Caco-2 (cell line): ENCODE measurements at regions of chr2 and their contacts with region 1.

Region 1: DNA sequence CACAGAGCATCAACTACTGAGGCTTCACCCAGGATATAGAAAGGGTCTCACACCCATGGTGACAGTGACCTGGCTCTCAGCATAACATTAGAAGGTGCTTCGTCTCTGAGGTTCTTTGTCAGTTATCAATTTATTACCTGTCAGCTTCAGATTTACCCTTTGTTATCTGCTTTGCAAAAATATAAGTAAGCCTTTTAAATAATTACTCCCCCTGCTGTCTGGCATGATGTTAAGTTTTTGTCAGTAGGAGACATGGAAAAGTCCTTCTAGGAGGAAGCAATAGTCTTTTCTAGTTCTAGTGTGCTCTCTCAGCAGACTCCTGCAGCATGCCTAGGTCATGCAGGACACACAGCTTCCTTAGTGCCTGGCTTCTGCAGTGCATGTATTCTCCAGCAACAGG is 149.9 kb downstream of the RDH14 start:
- DNase-seq: no peak
- H3K4me3 ChIP-seq: no peak overlapping the region
- H3K4me3 Mint-ChIP-seq: no peak overlapping the region
- H3K27ac Mint-ChIP-seq: no peak overlapping the region
- H3K4me1 ChIP-seq: no peaks in the 10 kb centered on the region
- H3K4me1 Mint-ChIP-seq: no peaks in the 10 kb centered on the region
- H3K27me3 ChIP-seq: no peaks in the 10 kb centered on the region
- H3K27me3 Mint-ChIP-seq: no peaks in the 10 kb centered on the region
- CTCF ChIP-seq: peak in 1 of 2 experiments; percentile 26

Region 2: DNA sequence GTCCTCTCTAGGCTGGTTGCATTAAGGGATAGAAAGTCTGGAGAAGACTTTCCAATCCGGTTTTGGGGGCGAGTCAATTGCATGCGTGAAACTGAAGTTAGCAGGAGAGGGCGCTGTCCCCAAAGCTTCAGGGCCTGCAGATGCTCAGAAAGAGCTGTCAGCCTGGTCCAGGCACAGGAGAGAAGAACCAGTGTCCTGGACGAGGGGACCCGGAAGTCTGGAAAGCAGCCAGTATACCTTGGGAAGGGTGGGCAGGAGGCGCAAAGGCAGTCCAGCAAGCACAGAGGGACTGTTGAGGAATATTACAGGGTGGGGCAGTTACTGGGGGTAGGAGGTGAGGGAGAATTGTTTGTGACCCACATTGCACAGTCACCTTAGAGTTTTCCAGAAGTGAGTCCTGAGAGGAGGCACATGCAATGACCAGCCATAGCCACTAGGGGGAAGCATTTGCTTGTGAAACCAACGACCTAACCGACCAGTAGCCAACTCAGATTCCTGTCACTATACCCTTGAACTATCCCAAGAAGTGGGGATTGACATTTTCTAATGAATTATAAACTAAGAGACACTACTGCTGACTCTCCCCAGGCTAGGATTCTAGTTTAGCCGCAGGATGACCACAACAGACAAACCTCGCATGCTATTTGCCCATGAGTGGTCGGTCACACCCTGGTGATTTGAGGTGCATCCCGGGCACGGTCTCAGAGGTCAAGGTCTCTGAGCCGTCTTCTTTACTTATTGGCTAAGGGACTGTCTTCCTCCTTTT is 22.9 kb before region 1 on chr2:
- CTCF ChIA-PET with region 1: no interaction called
- POLR2A ChIA-PET with region 1: no interaction called
- intact Hi-C with region 1: loop called (anchors 1 kb)
- DNase-seq: peak; percentile 72 to 82
- H3K4me3 ChIP-seq: no peak overlapping the region
- H3K4me3 Mint-ChIP-seq: no peak overlapping the region
- H3K27ac Mint-ChIP-seq: no peak overlapping the region
- H3K4me1 ChIP-seq: no peaks in the 10 kb centered on the region; the same call in 1 of the 2 replicates
- H3K4me1 Mint-ChIP-seq: no peaks in the 10 kb centered on the region
- H3K27me3 ChIP-seq: no peaks in the 10 kb centered on the region; the same call in 1 of the 2 replicates
- H3K27me3 Mint-ChIP-seq: peaks cover 3% of the 10 kb centered on the region
- CTCF ChIP-seq: peak; percentile 95 to 98

Region 3: GRCh38 chr2:18432999-18433398 is 22.5 kb after region 1 on chr2:
- CTCF ChIA-PET with region 1: no interaction called
- POLR2A ChIA-PET with region 1: no interaction called
- intact Hi-C with region 1: no loop called
- DNase-seq: no peak
- H3K4me3 ChIP-seq: no peak overlapping the region
- H3K4me3 Mint-ChIP-seq: no peak overlapping the region
- H3K27ac Mint-ChIP-seq: no peak overlapping the region
- H3K4me1 ChIP-seq: no peaks in the 10 kb centered on the region
- H3K4me1 Mint-ChIP-seq: no peaks in the 10 kb centered on the region
- H3K27me3 ChIP-seq: no peaks in the 10 kb centered on the region; the same call in 1 of the 2 replicates
- H3K27me3 Mint-ChIP-seq: peaks cover 16% of the 10 kb centered on the region
- CTCF ChIP-seq: no peak